PC-3 (cell line): ENCODE measurements at regions of chr4 and their contacts with region 1.

Region 1: GRCh38 chr4:40976343-40976742 is 226.6 kb downstream of the NSUN7 start:
- DNase-seq: peak; percentile 79
- ATAC-seq: peak; percentile 64
- H3K4me3 ChIP-seq: no peak overlapping the region
- H3K27ac ChIP-seq: no peak overlapping the region
- H3K4me1 ChIP-seq: no peaks in the 10 kb centered on the region
- H3K27me3 ChIP-seq: no peaks in the 10 kb centered on the region
- CTCF ChIP-seq: peak; percentile 67

Region 2: GRCh38 chr4:41079871-41080560 is 103.7 kb after region 1 on chr4:
- CTCF ChIA-PET with region 1: no interaction called
- POLR2A ChIA-PET with region 1: no interaction called
- intact Hi-C with region 1: no loop called
- DNase-seq: no peak
- ATAC-seq: no peak
- H3K4me3 ChIP-seq: no peak overlapping the region
- H3K27ac ChIP-seq: no peak overlapping the region
- H3K4me1 ChIP-seq: no peaks in the 10 kb centered on the region
- H3K27me3 ChIP-seq: no peaks in the 10 kb centered on the region
- CTCF ChIP-seq: no peak

Region 3: GRCh38 chr4:41221850-41222645 is 245.7 kb after region 1 on chr4:
- CTCF ChIA-PET with region 1: interaction called, 10 read pairs
- POLR2A ChIA-PET with region 1: no interaction called
- intact Hi-C with region 1: no loop called
- DNase-seq: peak; percentile 54
- ATAC-seq: peak; percentile 37; the same call in 1 of the 2 replicates
- H3K4me3 ChIP-seq: no peak overlapping the region
- H3K27ac ChIP-seq: no peak overlapping the region
- H3K4me1 ChIP-seq: peaks cover 14% of the 10 kb centered on the region
- H3K27me3 ChIP-seq: no peaks in the 10 kb centered on the region
- CTCF ChIP-seq: no peak

Region 4: GRCh38 chr4:41339812-41340809 is 363.8 kb after region 1 on chr4:
- CTCF ChIA-PET with region 1: no interaction called
- POLR2A ChIA-PET with region 1: no interaction called
- intact Hi-C with region 1: no loop called
- DNase-seq: peak; percentile 52
- ATAC-seq: peak; percentile 66
- H3K4me3 ChIP-seq: peak overlapping the region; percentile 34; the same call in 1 of the 2 replicates
- H3K27ac ChIP-seq: peak overlapping the region; percentile 49
- H3K4me1 ChIP-seq: peaks cover 15% of the 10 kb centered on the region
- H3K27me3 ChIP-seq: no peaks in the 10 kb centered on the region
- CTCF ChIP-seq: no peak